ENCODE measurements at regions of chr17 and their contacts with region 1.

Region 1: DNA sequence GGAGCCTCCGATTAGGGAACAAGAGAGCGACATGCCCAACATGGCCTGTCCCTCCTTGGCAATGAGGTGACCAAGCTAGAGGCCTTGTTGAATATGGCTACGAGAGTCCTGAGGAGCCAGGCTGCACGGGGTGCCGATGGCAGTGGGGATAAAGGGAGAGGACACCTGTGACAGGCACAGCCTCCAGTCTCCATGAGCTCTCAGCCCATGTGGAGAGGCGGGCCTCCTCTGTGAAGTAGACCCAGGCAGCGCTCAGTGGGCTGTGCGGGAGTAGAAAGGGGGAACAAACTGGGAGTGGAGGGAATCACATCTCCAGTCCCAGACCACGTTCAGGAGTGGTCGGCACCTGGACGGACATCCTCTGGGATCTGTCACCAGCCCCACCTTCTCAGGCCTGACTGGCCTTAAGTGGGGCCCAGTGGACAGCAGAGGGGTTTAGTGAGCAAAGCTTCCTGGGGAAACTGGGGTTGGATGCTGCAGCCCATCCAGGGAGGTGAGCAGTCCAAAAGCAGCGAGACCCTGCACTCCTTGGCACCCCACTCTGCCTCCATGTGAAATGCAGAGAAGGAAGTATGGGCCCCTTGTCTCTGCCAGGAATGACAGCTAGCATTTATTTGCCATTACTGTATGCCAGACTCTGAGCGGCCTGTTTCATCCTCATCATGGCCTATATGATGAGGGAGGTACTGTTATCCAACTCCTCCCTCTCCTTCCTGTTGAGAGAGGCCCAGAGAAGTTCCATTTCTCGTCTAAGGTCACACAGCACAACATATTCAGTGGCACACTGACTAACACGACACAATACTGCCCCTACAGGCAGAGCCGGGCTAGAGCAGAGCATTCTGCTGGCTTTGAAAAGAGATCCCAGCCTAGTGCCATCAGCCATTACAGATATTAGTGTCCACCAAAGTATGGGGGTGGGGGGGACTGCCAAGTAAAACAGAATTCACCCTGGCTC is 4.5 kb upstream of the TMEM92 start:
- DNase-seq: peak; percentile 80
- ATAC-seq: peak; percentile 82
- H3K4me3 Mint-ChIP-seq: no peak overlapping the region
- H3K27ac Mint-ChIP-seq: no peak overlapping the region
- H3K4me1 Mint-ChIP-seq: peaks cover 18% of the 10 kb centered on the region
- H3K27me3 Mint-ChIP-seq: peaks cover 18% of the 10 kb centered on the region

Region 2: DNA sequence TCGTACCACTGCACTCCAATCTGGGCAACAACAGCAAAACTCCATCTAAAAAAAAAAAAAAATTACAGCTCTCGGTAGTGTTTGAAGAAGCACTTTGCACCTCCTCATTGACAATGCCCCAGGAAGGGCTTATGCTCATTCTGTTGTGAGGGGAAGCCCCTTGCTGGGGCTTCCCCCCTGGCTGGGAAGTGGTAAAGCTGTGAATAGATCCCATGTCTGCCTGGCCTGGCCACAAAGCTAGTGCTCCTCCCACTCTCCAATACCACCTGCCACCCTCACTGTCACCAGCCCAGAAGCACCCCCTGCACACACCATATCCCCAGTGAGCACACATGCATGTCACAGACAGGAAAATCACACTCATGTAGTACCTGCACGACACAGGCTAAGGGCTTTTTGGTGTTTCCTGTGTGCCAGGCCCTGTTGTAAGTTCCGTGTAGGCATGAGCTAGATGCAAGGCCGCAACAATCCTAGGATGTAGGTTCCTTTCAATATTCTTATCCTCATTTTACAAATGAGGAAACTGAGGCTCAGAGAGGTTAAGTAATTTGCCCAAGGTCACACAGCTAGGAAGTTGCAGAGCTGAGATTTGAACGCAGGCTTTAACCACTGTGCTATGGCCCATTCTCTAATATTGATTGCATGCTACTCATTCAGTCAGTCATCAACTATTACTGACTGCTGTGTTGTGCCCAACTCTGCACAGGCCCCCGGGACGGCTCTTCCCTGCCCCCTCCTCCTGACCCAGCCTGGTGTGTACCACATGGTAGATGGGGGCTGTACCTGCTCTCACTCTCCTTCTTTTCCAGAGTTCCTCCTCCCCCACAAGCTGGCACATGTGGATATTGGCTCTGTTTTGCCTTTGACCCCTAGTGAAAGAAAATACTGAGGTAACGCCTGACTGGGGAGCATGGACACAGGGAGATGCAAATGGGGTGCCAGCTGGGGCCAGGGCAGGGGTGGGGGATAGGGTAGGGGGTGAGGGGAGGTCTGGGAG is 56.4 kb before region 1 on chr17:
- CTCF ChIA-PET with region 1: interaction called, 11 read pairs
- POLR2A ChIA-PET with region 1: interaction called, 3 read pairs
- DNase-seq: peak; percentile 68
- ATAC-seq: peak; percentile 86
- H3K4me3 Mint-ChIP-seq: no peak overlapping the region
- H3K27ac Mint-ChIP-seq: peak overlapping the region; percentile 70
- H3K4me1 Mint-ChIP-seq: peaks cover 10% of the 10 kb centered on the region
- H3K27me3 Mint-ChIP-seq: peaks cover 53% of the 10 kb centered on the region

Region 3: GRCh38 chr17:50258647-50259476 is 10.9 kb before region 1 on chr17:
- CTCF ChIA-PET with region 1: no interaction called
- POLR2A ChIA-PET with region 1: no interaction called
- DNase-seq: no peak
- ATAC-seq: no peak
- H3K4me3 Mint-ChIP-seq: no peak overlapping the region
- H3K27ac Mint-ChIP-seq: no peak overlapping the region
- H3K4me1 Mint-ChIP-seq: no peaks in the 10 kb centered on the region
- H3K27me3 Mint-ChIP-seq: peaks cover 20% of the 10 kb centered on the region

Region 4: GRCh38 chr17:50283246-50283645 is 13.5 kb after region 1 on chr17:
- CTCF ChIA-PET with region 1: interaction called, 21 read pairs
- POLR2A ChIA-PET with region 1: no interaction called
- DNase-seq: no peak
- ATAC-seq: no peak
- H3K4me3 Mint-ChIP-seq: no peak overlapping the region
- H3K27ac Mint-ChIP-seq: no peak overlapping the region
- H3K4me1 Mint-ChIP-seq: peaks cover 11% of the 10 kb centered on the region
- H3K27me3 Mint-ChIP-seq: peaks cover 20% of the 10 kb centered on the region

Region 5: GRCh38 chr17:50289991-50290702 is 20.4 kb after region 1 on chr17:
- CTCF ChIA-PET with region 1: interaction called, 46 read pairs
- POLR2A ChIA-PET with region 1: no interaction called
- DNase-seq: no peak
- ATAC-seq: peak; percentile 60
- H3K4me3 Mint-ChIP-seq: no peak overlapping the region
- H3K27ac Mint-ChIP-seq: no peak overlapping the region
- H3K4me1 Mint-ChIP-seq: peaks cover 18% of the 10 kb centered on the region
- H3K27me3 Mint-ChIP-seq: peaks cover 16% of the 10 kb centered on the region

Measured in activated CD8-positive, alpha-beta T cell treated with anti-CD3 and anti-CD28 coated beads, Interleukin-2, amount 10 ng/mL, durations not matched to agents 7 days and 5 days (primary cell).